ENCODE measurements at regions of chr12 and their contacts with region 1.

Region 1: GRCh38 chr12:21677622-21678277 is 20.1 kb upstream of the LDHB start:
- DNase-seq: no peak
- ATAC-seq: no peak
- H3K4me3 ChIP-seq: no peak overlapping the region
- H3K27ac ChIP-seq: no peak overlapping the region
- H3K4me1 ChIP-seq: no peaks in the 10 kb centered on the region
- H3K27me3 ChIP-seq: peaks cover 0 to 3% of the 10 kb centered on the region in 2 experiments; a peak in 1 of 4 replicates
- CTCF ChIP-seq: no peak
- EP300 ChIP-seq: no peak
- POLR2A ChIP-seq: no peak
- RAD21 ChIP-seq: no peak

Region 2: GRCh38 chr12:21248679-21249078 is 429.1 kb before region 1 on chr12:
- CTCF ChIA-PET with region 1: interaction called, 30 read pairs
- POLR2A ChIA-PET with region 1: no interaction called
- RAD21 ChIA-PET with region 1: interaction called, 7 read pairs
- SMC1A ChIA-PET with region 1: interaction called, 7 read pairs
- in situ Hi-C with region 1: loop called (anchors 5 kb)
- intact Hi-C with region 1: loop called (anchors 2 kb)
- DNase-seq: no peak
- ATAC-seq: peak; percentile 56; the same call in 2 of the 3 replicates
- H3K4me3 ChIP-seq: no peak overlapping the region
- H3K27ac ChIP-seq: no peak overlapping the region
- H3K4me1 ChIP-seq: no peaks in the 10 kb centered on the region
- H3K27me3 ChIP-seq: no peaks in the 10 kb centered on the region
- CTCF ChIP-seq: peak in 1 of 3 experiments; percentile 18; a peak in 2 of 6 replicates
- EP300 ChIP-seq: no peak
- POLR2A ChIP-seq: no peak
- RAD21 ChIP-seq: no peak

Region 3: DNA sequence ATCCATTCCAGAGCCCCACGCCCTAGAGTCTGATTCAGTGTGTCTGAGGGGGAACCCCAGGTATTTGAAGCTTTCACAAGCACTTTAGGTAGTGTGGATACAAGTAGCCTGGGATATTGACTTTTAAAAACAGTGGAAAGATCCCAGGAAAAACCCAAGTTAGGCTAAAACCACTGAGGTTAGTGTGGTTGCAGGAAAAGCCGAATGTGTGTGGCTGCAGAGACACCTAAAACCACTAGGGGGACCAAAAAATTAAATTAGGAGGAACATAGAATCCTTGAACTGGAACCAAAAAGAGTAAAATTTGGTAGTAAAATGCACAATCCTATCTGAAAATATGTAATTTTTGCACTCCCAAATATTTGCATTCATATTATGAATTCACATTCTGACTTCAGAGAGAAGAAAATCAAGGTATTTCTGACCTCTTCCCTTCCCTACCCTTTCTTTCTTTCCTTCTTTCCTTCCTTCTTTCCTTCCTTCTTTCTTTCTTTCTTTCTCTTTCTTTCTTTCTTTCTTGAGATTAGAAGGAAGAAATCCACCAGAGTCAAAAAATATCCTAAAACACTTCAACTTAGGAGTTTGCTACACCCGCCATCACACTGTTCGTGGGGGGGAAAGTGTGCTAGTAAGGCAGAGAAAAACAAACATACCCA is 380.9 kb before region 1 on chr12:
- CTCF ChIA-PET with region 1: interaction called, 6 read pairs
- POLR2A ChIA-PET with region 1: no interaction called
- RAD21 ChIA-PET with region 1: interaction called, 6 read pairs
- SMC1A ChIA-PET with region 1: no interaction called
- in situ Hi-C with region 1: no loop called
- intact Hi-C with region 1: loop called (anchors 2 kb)
- DNase-seq: no peak
- ATAC-seq: peak; percentile 70
- H3K4me3 ChIP-seq: no peak overlapping the region
- H3K27ac ChIP-seq: no peak overlapping the region
- H3K4me1 ChIP-seq: no peaks in the 10 kb centered on the region
- H3K27me3 ChIP-seq: no peaks in the 10 kb centered on the region
- CTCF ChIP-seq: peak; percentile 51 to 75 (median 65)
- EP300 ChIP-seq: no peak
- POLR2A ChIP-seq: no peak
- RAD21 ChIP-seq: peak; percentile 39

Region 4: GRCh38 chr12:21324551-21324950 is 353.2 kb before region 1 on chr12:
- CTCF ChIA-PET with region 1: no interaction called
- POLR2A ChIA-PET with region 1: no interaction called
- RAD21 ChIA-PET with region 1: no interaction called
- SMC1A ChIA-PET with region 1: no interaction called
- in situ Hi-C with region 1: loop called (anchors 10 kb)
- intact Hi-C with region 1: no loop called
- DNase-seq: no peak
- ATAC-seq: no peak
- H3K4me3 ChIP-seq: no peak overlapping the region
- H3K27ac ChIP-seq: no peak overlapping the region
- H3K4me1 ChIP-seq: no peaks in the 10 kb centered on the region
- H3K27me3 ChIP-seq: no peaks in the 10 kb centered on the region
- CTCF ChIP-seq: no peak
- EP300 ChIP-seq: no peak
- POLR2A ChIP-seq: no peak
- RAD21 ChIP-seq: no peak

Region 5: GRCh38 chr12:21599143-21599999 is 78.4 kb before region 1 on chr12:
- CTCF ChIA-PET with region 1: interaction called, 11 read pairs
- POLR2A ChIA-PET with region 1: no interaction called
- RAD21 ChIA-PET with region 1: no interaction called
- SMC1A ChIA-PET with region 1: interaction called, 3 read pairs
- in situ Hi-C with region 1: no loop called
- intact Hi-C with region 1: no loop called
- DNase-seq: no peak
- ATAC-seq: peak; percentile 90
- H3K4me3 ChIP-seq: no peak overlapping the region
- H3K27ac ChIP-seq: no peak overlapping the region
- H3K4me1 ChIP-seq: 0 out of 2 replicates have a peak, but pooled peaks cover 3% of the 10 kb centered on the region
- H3K27me3 ChIP-seq: no peaks in the 10 kb centered on the region
- CTCF ChIP-seq: no peak
- EP300 ChIP-seq: no peak
- POLR2A ChIP-seq: no peak
- RAD21 ChIP-seq: no peak

Region 6: DNA sequence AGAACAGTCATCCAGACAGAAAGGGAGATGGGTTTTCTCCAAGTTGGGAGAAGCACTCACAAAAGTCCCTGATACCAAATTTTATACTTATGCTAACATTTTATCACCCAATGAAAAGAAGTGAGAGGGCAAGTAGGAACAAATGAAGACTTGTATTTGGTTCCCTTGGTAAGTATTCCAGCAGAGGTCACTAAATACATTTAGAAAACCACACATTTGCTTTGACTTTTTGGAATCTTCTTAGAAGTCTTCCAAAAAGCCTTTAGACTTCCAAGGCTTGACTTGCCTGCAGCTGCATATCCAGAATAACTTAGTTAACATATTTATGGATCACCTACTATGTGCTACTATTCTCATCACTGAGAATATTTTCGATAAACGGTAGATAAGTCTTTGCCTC is 70.0 kb before region 1 on chr12:
- CTCF ChIA-PET with region 1: interaction called, 5 read pairs
- POLR2A ChIA-PET with region 1: no interaction called
- RAD21 ChIA-PET with region 1: interaction called, 4 read pairs
- SMC1A ChIA-PET with region 1: interaction called, 9 read pairs
- in situ Hi-C with region 1: no loop called
- intact Hi-C with region 1: loop called (anchors 1 kb)
- DNase-seq: no peak
- ATAC-seq: no peak
- H3K4me3 ChIP-seq: no peak overlapping the region
- H3K27ac ChIP-seq: no peak overlapping the region
- H3K4me1 ChIP-seq: no peaks in the 10 kb centered on the region
- H3K27me3 ChIP-seq: no peaks in the 10 kb centered on the region
- CTCF ChIP-seq: peak in 2 of 3 experiments; percentile 13 to 33; a peak in 3 of 6 replicates
- EP300 ChIP-seq: no peak
- POLR2A ChIP-seq: no peak
- RAD21 ChIP-seq: 0 out of 2 replicates have a peak, but pooled peaks have one; percentile 36

Region 7: GRCh38 chr12:21697904-21698630 is 20.3 kb after region 1 on chr12:
- CTCF ChIA-PET with region 1: interaction called, 11 read pairs
- POLR2A ChIA-PET with region 1: no interaction called
- RAD21 ChIA-PET with region 1: interaction called, 4 read pairs
- SMC1A ChIA-PET with region 1: interaction called, 6 read pairs
- in situ Hi-C with region 1: no loop called
- intact Hi-C with region 1: no loop called
- DNase-seq: no peak
- ATAC-seq: no peak
- H3K4me3 ChIP-seq: no peak overlapping the region
- H3K27ac ChIP-seq: no peak overlapping the region
- H3K4me1 ChIP-seq: no peaks in the 10 kb centered on the region
- H3K27me3 ChIP-seq: no peaks in the 10 kb centered on the region
- CTCF ChIP-seq: peak; percentile 13 to 54 (median 39); a peak in 4 of 6 replicates
- EP300 ChIP-seq: no peak
- POLR2A ChIP-seq: no peak
- RAD21 ChIP-seq: peak; percentile 53

Region 8: DNA sequence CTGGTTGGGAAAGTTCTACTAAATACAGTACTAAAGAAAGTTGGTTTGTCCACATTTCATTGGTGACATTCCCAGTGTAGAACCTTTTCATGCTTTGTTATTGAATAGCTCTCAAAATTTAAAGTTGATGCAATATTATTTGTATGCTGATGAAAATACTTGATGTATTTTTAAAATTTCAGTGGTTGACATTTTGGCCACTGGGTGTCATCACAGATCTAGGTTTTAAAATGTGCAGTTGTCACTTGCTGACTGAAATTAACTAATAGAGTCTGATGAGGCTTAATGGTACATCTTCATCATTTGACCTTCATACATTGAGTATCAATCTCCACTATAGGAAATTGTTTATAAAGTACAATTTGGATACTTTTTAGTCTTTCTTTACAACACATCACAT is 405.4 kb after region 1 on chr12:
- CTCF ChIA-PET with region 1: no interaction called
- POLR2A ChIA-PET with region 1: no interaction called
- RAD21 ChIA-PET with region 1: no interaction called
- SMC1A ChIA-PET with region 1: no interaction called
- in situ Hi-C with region 1: no loop called
- intact Hi-C with region 1: no loop called
- DNase-seq: no peak
- ATAC-seq: peak; percentile 55
- H3K4me3 ChIP-seq: no peak overlapping the region
- H3K27ac ChIP-seq: no peak overlapping the region
- H3K4me1 ChIP-seq: no peaks in the 10 kb centered on the region
- H3K27me3 ChIP-seq: no peaks in the 10 kb centered on the region
- CTCF ChIP-seq: peak; percentile 16 to 50 (median 27); a peak in 3 of 6 replicates
- EP300 ChIP-seq: no peak
- POLR2A ChIP-seq: no peak
- RAD21 ChIP-seq: peak; percentile 66